OCI-LY7 (cell line): ENCODE measurements at regions of chr10 and their contacts with region 1.

Region 1: DNA sequence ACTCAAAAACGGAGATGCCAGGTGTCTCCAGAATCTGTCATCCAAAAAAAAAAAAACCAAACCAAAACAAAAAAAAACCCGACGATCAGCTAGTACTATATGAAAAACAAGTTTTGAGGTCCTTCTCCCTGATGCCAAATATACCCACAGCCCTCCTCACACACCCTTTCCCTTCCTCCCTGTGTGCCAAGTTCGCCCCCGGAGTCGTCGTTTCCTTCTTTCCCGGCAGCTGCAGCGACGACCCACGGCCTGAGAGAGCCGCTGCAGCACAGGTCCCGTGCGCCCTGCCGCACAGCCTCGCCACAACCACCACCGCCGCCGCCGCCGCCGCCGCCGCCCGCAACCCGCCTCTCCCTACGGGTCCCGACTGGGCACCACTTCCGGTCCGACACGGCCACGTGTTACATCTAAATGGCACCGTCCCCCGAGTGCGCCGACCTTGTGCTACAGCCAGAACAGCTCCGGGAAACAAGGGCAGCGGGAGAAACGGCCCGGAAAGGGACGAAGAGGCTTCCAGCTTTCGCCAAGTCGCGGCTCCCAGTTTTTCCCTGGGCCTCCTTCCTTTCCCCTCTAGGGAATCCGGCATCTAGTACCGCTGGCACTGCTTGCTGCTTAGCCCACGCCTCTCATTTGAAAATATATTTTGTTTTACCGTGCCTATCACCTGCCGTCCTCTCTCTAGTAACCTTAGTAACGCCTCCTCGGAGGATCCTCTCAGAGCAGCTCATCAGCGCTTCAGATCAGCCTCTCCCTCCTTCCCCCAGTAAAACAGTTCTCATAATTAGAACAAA is at the start of gene FRA10AC1:
- DNase-seq: peak; percentile 93
- H3K4me3 ChIP-seq: peak within 1 kb of the TSS; percentile 73
- H3K27ac ChIP-seq: peak within 1 kb of the TSS; percentile 64
- H3K4me1 ChIP-seq: peaks cover 25% of the 10 kb centered on the region
- CTCF ChIP-seq: peak; percentile 46
- total RNA-seq, gene FRA10AC1: 11.9 and 24.3 TPM in 2 replicates

Region 2: GRCh38 chr10:93718937-93719725 is 16.7 kb after region 1 on chr10:
- CTCF ChIA-PET with region 1: no interaction called
- POLR2A ChIA-PET with region 1: interaction called, 14 read pairs
- intact Hi-C with region 1: no loop called
- DNase-seq: peak; percentile 30
- H3K4me3 ChIP-seq: no peak overlapping the region
- H3K27ac ChIP-seq: no peak overlapping the region
- H3K4me1 ChIP-seq: peaks cover 10% of the 10 kb centered on the region
- CTCF ChIP-seq: no peak

Region 3: DNA sequence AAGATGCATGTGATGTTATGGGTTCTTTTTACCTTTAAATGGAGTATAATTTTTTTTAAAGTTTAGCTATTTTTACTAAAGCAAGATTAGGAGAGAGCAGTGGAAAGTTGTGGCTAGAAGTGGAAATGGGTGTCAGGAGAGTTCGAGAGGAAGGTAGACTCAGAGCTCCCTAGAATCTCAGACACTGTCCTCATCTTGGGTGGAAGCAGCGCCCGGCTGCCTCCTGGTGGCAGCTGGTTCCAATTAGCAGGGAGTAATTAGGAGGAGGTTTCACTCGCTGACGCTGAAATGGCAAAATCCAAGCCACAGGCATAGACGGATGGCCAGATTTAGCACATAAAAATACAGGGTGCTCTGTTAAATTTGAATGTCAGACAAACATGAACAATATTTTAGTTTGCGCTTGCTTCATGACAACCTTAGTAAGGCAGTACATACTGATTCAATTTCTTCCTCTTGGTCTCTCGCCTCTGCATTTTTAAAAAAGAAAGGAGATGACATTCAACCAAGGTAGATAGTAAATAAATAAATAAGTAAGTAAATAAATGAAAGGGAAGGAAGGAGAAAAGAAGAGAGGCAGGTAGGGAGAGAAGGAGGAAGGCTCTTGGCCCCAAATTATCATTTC is 113.8 kb after region 1 on chr10:
- CTCF ChIA-PET with region 1: no interaction called
- POLR2A ChIA-PET with region 1: no interaction called
- intact Hi-C with region 1: loop called (anchors 1 kb)
- DNase-seq: peak; percentile 13
- H3K4me3 ChIP-seq: no peak overlapping the region
- H3K27ac ChIP-seq: no peak overlapping the region
- H3K4me1 ChIP-seq: no peaks in the 10 kb centered on the region
- CTCF ChIP-seq: peak; percentile 75

Region 4: GRCh38 chr10:93893646-93894515 is 191.5 kb after region 1 on chr10 and contains the start of gene SLC35G1:
- CTCF ChIA-PET with region 1: no interaction called
- POLR2A ChIA-PET with region 1: interaction called, 8 read pairs
- intact Hi-C with region 1: loop called (anchors 10 kb)
- DNase-seq: peak; percentile 87
- H3K4me3 ChIP-seq: peak within 1 kb of the TSS; percentile 73
- H3K27ac ChIP-seq: no peak within 1 kb of the TSS
- H3K4me1 ChIP-seq: peaks cover 15% of the 10 kb centered on the region
- CTCF ChIP-seq: 0 out of 2 replicates have a peak, but pooled peaks have one; percentile 17
- total RNA-seq, gene SLC35G1: 5.9 and 6.0 TPM in 2 replicates

Region 5: GRCh38 chr10:93921338-93921737 is 218.9 kb after region 1 on chr10:
- CTCF ChIA-PET with region 1: no interaction called
- POLR2A ChIA-PET with region 1: no interaction called
- intact Hi-C with region 1: loop called (anchors 5 kb)
- DNase-seq: peak; percentile 47
- H3K4me3 ChIP-seq: no peak overlapping the region
- H3K27ac ChIP-seq: no peak overlapping the region
- H3K4me1 ChIP-seq: no peaks in the 10 kb centered on the region
- CTCF ChIP-seq: peak; percentile 85

Region 6: GRCh38 chr10:94364482-94364881 is 662.1 kb after region 1 on chr10:
- CTCF ChIA-PET with region 1: no interaction called
- POLR2A ChIA-PET with region 1: no interaction called
- intact Hi-C with region 1: no loop called
- DNase-seq: no peak
- H3K4me3 ChIP-seq: no peak overlapping the region
- H3K27ac ChIP-seq: no peak overlapping the region
- H3K4me1 ChIP-seq: peaks cover 17% of the 10 kb centered on the region
- CTCF ChIP-seq: no peak

Region 7: DNA sequence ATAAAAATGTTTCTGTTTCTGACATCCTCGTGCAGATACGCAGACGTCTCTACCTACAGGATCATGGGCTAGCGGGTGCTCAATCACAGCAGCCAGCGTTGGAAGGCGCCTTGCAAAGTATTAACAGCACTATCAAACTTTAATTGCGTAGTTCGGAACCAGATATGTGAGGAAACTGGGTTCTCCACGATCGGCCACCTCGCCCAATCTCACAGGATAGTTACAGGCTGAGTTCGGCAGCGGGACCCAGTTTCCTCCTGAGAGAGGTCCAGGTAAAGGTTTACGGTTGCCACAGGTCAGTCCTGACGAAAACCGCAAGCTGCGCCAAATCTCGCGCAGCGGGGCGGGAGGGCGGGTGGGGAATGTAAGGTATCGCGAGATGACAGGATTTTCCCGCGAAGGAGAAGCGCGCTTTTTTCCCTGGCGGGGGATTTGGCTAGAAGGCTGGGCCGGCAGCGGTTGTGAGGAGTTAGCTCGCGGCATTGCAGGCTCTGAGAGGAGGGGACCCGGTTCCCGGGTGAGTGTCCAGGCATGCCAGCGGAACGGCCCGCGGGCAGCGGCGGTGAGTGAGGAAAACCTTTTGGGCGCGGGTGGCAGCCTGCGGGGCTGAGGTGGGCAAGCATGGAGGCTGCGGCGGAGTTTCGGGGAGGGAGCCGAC is 843.1 kb after region 1 on chr10 and contains the start of gene HELLS:
- CTCF ChIA-PET with region 1: no interaction called
- POLR2A ChIA-PET with region 1: no interaction called
- intact Hi-C with region 1: loop called (anchors 5 kb)
- DNase-seq: peak; percentile 93
- H3K4me3 ChIP-seq: peak within 1 kb of the TSS; percentile 91
- H3K27ac ChIP-seq: peak within 1 kb of the TSS; percentile 59
- H3K4me1 ChIP-seq: peaks cover 14% of the 10 kb centered on the region
- CTCF ChIP-seq: no peak
- total RNA-seq, gene HELLS: 204 and 233 TPM in 2 replicates